B cell (primary cell): ENCODE measurements at regions of chr3 and their contacts with region 1.

Region 1: DNA sequence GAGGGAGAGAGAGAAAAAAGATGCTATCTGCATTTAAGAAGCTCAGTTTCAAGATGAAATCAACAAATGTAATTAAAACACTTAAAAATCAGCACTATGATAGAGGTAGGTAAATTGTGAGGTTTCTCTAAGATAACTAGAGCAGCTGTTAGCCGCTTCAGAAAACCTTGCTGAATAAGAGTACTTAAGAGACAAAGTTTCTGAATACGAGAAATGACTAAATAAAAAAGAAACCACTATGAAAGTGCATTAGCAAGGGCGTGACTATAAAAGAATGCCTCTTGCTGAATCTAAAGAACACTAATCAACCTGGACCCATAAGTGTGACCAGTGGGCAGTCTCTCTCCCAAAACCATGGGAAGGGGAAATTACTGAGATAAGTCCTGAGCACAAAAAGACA is 41.8 kb downstream of the IQCB1 start:
- DNase-seq: peak; percentile 40
- ATAC-seq: no peak
- H3K4me3 ChIP-seq: peak overlapping the region; percentile 11 to 60 (median 33)
- H3K4me3 Mint-ChIP-seq: peak overlapping the region; percentile 90
- H3K27ac ChIP-seq: peak overlapping the region; percentile 76 to 87
- H3K27ac Mint-ChIP-seq: peak overlapping the region; percentile 96
- H3K4me1 ChIP-seq: peaks cover 30 to 43% of the 10 kb centered on the region in 2 donors
- H3K4me1 Mint-ChIP-seq: peaks cover 48% of the 10 kb centered on the region
- H3K27me3 ChIP-seq: no peaks in the 10 kb centered on the region
- H3K27me3 Mint-ChIP-seq: no peaks in the 10 kb centered on the region
- CTCF ChIP-seq: no peak

Region 2: DNA sequence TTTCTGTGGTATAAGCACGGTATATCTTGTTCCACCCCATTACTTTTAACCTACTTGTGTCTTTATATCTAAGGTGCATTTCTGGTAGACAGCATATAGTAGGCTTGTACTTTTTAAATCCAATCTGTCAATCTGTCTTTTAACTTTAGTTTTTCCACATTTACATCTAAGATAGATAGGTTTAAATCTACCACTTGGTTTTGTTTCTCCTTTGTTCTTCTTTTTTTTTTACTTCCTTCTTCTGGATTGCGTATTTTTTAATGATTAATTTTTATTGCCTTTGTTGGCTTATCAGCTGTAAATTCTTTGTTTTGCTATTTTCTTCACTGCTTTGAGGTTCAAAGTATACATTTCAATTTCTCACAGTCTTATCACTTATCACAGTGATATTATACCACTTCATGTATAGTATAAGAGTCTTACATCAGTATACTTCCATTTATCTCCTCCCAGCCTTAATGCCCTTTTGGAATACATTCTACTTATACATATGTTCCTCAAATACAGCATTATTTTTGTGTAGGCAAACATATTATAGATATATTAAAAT is 10.8 kb after region 1 on chr3:
- CTCF ChIA-PET with region 1: interaction called, 4 read pairs
- POLR2A ChIA-PET with region 1: interaction called, 11 read pairs
- intact Hi-C with region 1: loop called (anchors 1 kb)
- DNase-seq: peak; percentile 35
- ATAC-seq: peak; percentile 21
- H3K4me3 ChIP-seq: peak overlapping the region in 2 of 5 experiments; percentile 6 to 46
- H3K4me3 Mint-ChIP-seq: peak overlapping the region; percentile 83
- H3K27ac ChIP-seq: peak overlapping the region; percentile 22 to 77
- H3K27ac Mint-ChIP-seq: peak overlapping the region; percentile 87
- H3K4me1 ChIP-seq: peaks cover 12 to 52% of the 10 kb centered on the region in 2 donors
- H3K4me1 Mint-ChIP-seq: peaks cover 58% of the 10 kb centered on the region
- H3K27me3 ChIP-seq: no peaks in the 10 kb centered on the region
- H3K27me3 Mint-ChIP-seq: no peaks in the 10 kb centered on the region
- CTCF ChIP-seq: no peak

Region 3: GRCh38 chr3:121809249-121809648 is 16.2 kb after region 1 on chr3:
- CTCF ChIA-PET with region 1: no interaction called
- POLR2A ChIA-PET with region 1: interaction called, 11 read pairs
- intact Hi-C with region 1: loop called (anchors 2 kb)
- DNase-seq: peak; percentile 62
- ATAC-seq: peak; percentile 89
- H3K4me3 ChIP-seq: peak overlapping the region in 4 of 5 experiments; percentile 11 to 53 (median 24)
- H3K4me3 Mint-ChIP-seq: peak overlapping the region; percentile 74
- H3K27ac ChIP-seq: peak overlapping the region; percentile 65 to 83
- H3K27ac Mint-ChIP-seq: peak overlapping the region; percentile 83
- H3K4me1 ChIP-seq: peaks cover 24 to 40% of the 10 kb centered on the region in 2 donors
- H3K4me1 Mint-ChIP-seq: peaks cover 71% of the 10 kb centered on the region
- H3K27me3 ChIP-seq: no peaks in the 10 kb centered on the region
- H3K27me3 Mint-ChIP-seq: no peaks in the 10 kb centered on the region
- CTCF ChIP-seq: no peak

Region 4: GRCh38 chr3:121817753-121818152 is 24.7 kb after region 1 on chr3:
- CTCF ChIA-PET with region 1: interaction called, 4 read pairs
- POLR2A ChIA-PET with region 1: no interaction called
- intact Hi-C with region 1: loop called (anchors 2 kb)
- DNase-seq: no peak
- ATAC-seq: no peak
- H3K4me3 ChIP-seq: no peak overlapping the region
- H3K4me3 Mint-ChIP-seq: no peak overlapping the region
- H3K27ac ChIP-seq: peak overlapping the region in 1 of 2 donors; percentile 25
- H3K27ac Mint-ChIP-seq: peak overlapping the region; percentile 62
- H3K4me1 ChIP-seq: peaks cover 9 to 13% of the 10 kb centered on the region in 2 donors
- H3K4me1 Mint-ChIP-seq: peaks cover 64% of the 10 kb centered on the region
- H3K27me3 ChIP-seq: no peaks in the 10 kb centered on the region
- H3K27me3 Mint-ChIP-seq: no peaks in the 10 kb centered on the region
- CTCF ChIP-seq: no peak

Region 5: GRCh38 chr3:121834696-121835464 is 41.8 kb after region 1 on chr3 and contains the starts of genes EAF2 and IQCB1:
- CTCF ChIA-PET with region 1: no interaction called
- POLR2A ChIA-PET with region 1: interaction called, 8 read pairs
- intact Hi-C with region 1: loop called (anchors 5 kb)
- DNase-seq: peak; percentile 99
- ATAC-seq: peak; percentile 97
- H3K4me3 ChIP-seq: peak within 1 kb of the TSS; percentile 83 to 97 (median 94)
- H3K4me3 Mint-ChIP-seq: peak within 1 kb of the TSS; percentile 89
- H3K27ac ChIP-seq: peak within 1 kb of the TSS; percentile 88 to 94
- H3K27ac Mint-ChIP-seq: peak within 1 kb of the TSS; percentile 88
- H3K4me1 ChIP-seq: peaks cover 22 to 46% of the 10 kb centered on the region in 2 donors
- H3K4me1 Mint-ChIP-seq: peaks cover 64% of the 10 kb centered on the region
- H3K27me3 ChIP-seq: no peaks in the 10 kb centered on the region
- H3K27me3 Mint-ChIP-seq: no peaks in the 10 kb centered on the region
- CTCF ChIP-seq: no peak
- total RNA-seq, gene EAF2: 31.1 and 35.0 TPM in 2 replicates
- total RNA-seq, gene IQCB1: 54.6 and 56.5 TPM in 2 replicates